ENCODE measurements at regions of chr6 and their contacts with region 1.

Region 1: GRCh38 chr6:90274451-90275030 is 22.1 kb downstream of the BACH2 start:
- DNase-seq: peak; percentile 96
- ATAC-seq: peak; percentile 89
- H3K4me3 Mint-ChIP-seq: peak overlapping the region; percentile 54
- H3K27ac Mint-ChIP-seq: peak overlapping the region; percentile 90
- H3K4me1 Mint-ChIP-seq: peaks cover 95% of the 10 kb centered on the region
- H3K27me3 Mint-ChIP-seq: no peaks in the 10 kb centered on the region

Region 2: GRCh38 chr6:89952686-89953085 is 321.9 kb before region 1 on chr6:
- CTCF ChIA-PET with region 1: interaction called, 3 read pairs
- POLR2A ChIA-PET with region 1: interaction called, 5 read pairs
- intact Hi-C with region 1: loop called (anchors 2 to 5 kb)
- DNase-seq: peak; percentile 66
- ATAC-seq: peak; percentile 60
- H3K4me3 Mint-ChIP-seq: no peak overlapping the region
- H3K27ac Mint-ChIP-seq: peak overlapping the region; percentile 79
- H3K4me1 Mint-ChIP-seq: peaks cover 75% of the 10 kb centered on the region
- H3K27me3 Mint-ChIP-seq: no peaks in the 10 kb centered on the region

Region 3: DNA sequence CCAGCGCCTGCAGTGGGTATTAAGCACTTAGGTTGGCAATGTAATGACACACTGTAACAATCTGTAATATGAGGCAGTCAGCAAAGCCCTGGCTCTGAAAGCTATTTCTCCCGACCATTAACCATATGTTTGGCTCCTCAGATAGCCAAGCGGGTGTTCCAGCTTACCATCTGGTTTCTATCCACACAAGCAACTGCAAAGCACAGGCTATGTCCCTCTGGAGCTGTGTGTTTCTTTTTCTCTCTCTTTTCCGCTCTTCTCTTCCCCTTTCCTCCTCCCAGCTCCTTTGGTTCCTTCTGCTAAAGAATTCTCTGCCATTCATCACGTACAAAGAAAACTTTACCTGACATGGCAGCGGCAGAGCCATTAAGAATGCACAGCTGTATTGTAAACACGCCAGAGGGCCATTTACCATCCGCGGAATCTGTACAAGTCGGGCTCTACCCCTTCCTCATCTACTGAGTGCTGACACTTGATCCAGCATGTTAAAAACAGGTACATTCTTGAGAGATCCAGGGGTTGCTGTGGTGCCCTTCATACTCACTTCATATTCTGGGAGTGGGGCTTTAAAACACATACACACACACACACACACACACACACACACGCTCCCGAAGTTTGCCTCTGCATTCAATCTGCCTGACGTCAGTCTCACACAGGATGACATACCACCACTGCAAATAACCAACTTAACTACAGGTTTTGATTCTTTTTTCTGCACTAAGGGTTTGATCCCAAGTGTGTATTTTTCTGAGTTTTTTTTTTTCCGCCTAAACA is 55.1 kb before region 1 on chr6:
- CTCF ChIA-PET with region 1: interaction called, 6 read pairs
- POLR2A ChIA-PET with region 1: interaction called, 16 read pairs
- intact Hi-C with region 1: loop called (anchors 1 to 2 kb)
- DNase-seq: peak; percentile 50
- ATAC-seq: no peak
- H3K4me3 Mint-ChIP-seq: no peak overlapping the region
- H3K27ac Mint-ChIP-seq: no peak overlapping the region
- H3K4me1 Mint-ChIP-seq: peaks cover 20% of the 10 kb centered on the region
- H3K27me3 Mint-ChIP-seq: no peaks in the 10 kb centered on the region

Region 4: DNA sequence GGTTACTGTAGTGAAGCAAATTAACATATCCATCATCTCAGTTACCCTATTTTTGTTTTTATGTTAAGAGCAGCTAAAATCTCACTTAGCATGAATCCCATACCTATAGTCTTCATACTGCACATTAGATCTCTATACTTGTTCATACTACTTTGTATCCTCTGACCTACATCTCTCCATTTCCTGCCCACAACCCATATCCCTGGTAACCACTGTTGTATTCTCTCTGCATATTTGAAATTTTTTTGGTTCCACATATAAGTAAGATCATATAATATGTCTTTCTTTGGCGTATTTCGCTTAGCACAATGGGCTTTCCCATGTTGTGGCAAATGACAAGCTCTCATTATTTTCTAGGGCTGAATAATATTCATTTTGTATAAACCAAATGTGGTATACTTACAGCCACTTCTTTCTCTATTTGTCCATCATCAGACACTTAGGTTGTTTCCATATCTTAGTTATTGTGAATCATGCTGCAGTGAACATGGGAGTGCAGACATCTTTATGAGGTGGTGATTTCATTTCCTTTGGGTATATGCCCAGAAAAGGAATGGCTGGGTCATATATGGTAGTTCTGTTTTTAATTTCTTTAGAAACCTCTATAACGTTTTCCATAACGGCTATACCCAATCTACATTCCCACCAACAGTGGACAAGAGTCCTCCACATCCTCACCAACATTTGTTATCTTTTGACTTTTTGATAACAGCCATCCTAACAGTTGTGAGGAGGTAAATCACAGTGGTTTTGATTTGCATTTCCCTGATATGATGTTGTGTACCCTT is 17.6 kb before region 1 on chr6:
- CTCF ChIA-PET with region 1: interaction called, 19 read pairs
- POLR2A ChIA-PET with region 1: interaction called, 5 read pairs
- intact Hi-C with region 1: loop called in 1 of 2 experiments (anchors 1 kb)
- DNase-seq: peak; percentile 51
- ATAC-seq: peak; percentile 87
- H3K4me3 Mint-ChIP-seq: no peak overlapping the region
- H3K27ac Mint-ChIP-seq: peak overlapping the region; percentile 85
- H3K4me1 Mint-ChIP-seq: peaks cover 92% of the 10 kb centered on the region
- H3K27me3 Mint-ChIP-seq: no peaks in the 10 kb centered on the region

Region 5: DNA sequence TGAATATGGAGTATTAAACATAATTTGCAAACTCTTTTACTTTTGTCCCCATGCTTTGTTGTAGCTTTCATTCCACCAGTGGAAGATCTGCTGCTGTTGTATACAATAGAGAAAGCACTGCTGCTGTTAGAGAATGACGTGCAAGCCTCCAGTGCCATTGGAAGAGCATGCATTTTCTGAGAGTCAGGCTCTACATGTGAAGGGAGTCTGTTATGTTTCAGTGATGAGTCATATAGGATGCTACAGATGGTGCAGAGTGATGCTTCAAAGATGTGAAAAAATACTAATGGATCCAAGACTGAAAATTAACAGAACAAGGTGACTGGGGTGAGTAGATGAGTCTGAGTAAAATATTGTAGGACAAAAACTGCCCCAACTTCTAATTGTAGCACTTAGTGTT is 44.5 kb after region 1 on chr6:
- CTCF ChIA-PET with region 1: no interaction called
- POLR2A ChIA-PET with region 1: interaction called, 3 read pairs
- intact Hi-C with region 1: loop called in 1 of 2 experiments (anchors 1 kb)
- DNase-seq: peak; percentile 40
- ATAC-seq: peak; percentile 82
- H3K4me3 Mint-ChIP-seq: no peak overlapping the region
- H3K27ac Mint-ChIP-seq: peak overlapping the region; percentile 80
- H3K4me1 Mint-ChIP-seq: peaks cover 43% of the 10 kb centered on the region
- H3K27me3 Mint-ChIP-seq: peaks cover 6% of the 10 kb centered on the region

Region 6: GRCh38 chr6:90472744-90473143 is 198.2 kb after region 1 on chr6:
- CTCF ChIA-PET with region 1: interaction called, 11 read pairs
- POLR2A ChIA-PET with region 1: interaction called, 5 read pairs
- intact Hi-C with region 1: loop called in 1 of 2 experiments (anchors 1 kb)
- DNase-seq: peak; percentile 51
- ATAC-seq: peak; percentile 9
- H3K4me3 Mint-ChIP-seq: peak overlapping the region; percentile 58
- H3K27ac Mint-ChIP-seq: peak overlapping the region; percentile 77
- H3K4me1 Mint-ChIP-seq: peaks cover 99% of the 10 kb centered on the region
- H3K27me3 Mint-ChIP-seq: peaks cover 2% of the 10 kb centered on the region

Measured in activated CD4-positive, alpha-beta T cell treated with anti-CD3 and anti-CD28 coated beads for 36 hours (primary cell).